ENCODE measurements at regions of chr13 and their contacts with region 1.

Region 1: GRCh38 chr13:20686863-20687579 is 16.5 kb upstream of the IL17D start:
- DNase-seq: no peak
- ATAC-seq: no peak
- H3K4me3 ChIP-seq: no peak overlapping the region
- H3K4me3 Mint-ChIP-seq: no peak overlapping the region
- H3K27ac ChIP-seq: no peak overlapping the region
- H3K27ac Mint-ChIP-seq: no peak overlapping the region
- H3K4me1 ChIP-seq: no peaks in the 10 kb centered on the region
- H3K4me1 Mint-ChIP-seq: no peaks in the 10 kb centered on the region
- H3K27me3 ChIP-seq: no peaks in the 10 kb centered on the region
- H3K27me3 Mint-ChIP-seq: no peaks in the 10 kb centered on the region

Region 2: DNA sequence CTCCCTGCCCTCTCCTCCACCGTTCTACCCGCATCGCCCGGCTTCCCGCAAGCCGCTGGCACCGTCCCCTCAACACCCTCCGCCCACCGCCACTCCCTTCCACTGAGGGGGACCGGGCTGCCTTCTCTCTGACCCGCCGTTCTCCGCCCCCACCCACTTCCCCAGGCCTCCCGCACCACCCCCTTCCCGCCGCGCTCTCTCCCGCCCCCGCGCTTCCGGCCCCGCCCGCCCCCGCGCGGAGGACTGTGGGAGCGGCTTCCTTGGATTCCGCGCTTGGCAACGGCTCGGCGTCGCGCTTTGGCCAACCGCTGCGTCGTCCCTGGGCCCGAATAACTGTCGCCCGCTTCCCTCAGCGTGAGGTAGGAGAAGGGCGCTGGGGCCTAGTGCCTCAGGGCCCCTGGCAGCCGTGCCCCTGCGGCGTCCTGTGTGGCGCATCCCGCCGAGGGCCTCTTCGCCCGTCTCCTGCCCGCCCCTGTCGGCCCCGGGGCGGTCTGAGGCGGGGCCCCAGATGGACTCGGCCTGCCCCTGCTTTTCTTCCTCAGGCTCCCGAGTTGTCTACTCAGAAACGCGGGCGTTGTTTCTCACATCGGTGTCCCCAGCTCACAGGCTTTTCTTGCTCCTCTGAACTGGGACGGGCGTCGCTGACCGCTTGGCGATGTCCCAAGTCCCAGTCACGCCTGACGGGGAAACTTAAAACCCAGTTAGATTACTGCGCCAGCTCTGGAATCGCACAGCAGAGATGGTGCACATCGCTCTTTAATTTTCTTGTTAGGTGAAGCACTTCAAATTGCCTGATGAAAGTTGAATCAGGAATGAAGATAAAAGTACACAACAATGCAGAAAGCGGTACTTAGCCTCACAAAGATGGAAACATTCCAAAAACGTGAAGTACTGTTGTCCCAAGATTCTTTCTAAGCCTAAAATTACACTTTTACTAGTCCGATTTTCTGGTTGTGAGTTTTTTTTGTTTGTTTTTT is 119.8 kb before region 1 on chr13 and contains the start of gene IFT88:
- CTCF ChIA-PET with region 1: no interaction called
- POLR2A ChIA-PET with region 1: interaction called in 1 of 2 experiments, 10 read pairs
- DNase-seq: peak; percentile 58 to 84 (median 73)
- ATAC-seq: peak; percentile 90 to 94 (median 91)
- H3K4me3 ChIP-seq: peak within 1 kb of the TSS; percentile 56 to 73
- H3K4me3 Mint-ChIP-seq: peak within 1 kb of the TSS; percentile 88 to 97 (median 90)
- H3K27ac ChIP-seq: peak within 1 kb of the TSS; percentile 56
- H3K27ac Mint-ChIP-seq: peak within 1 kb of the TSS; percentile 93
- H3K4me1 ChIP-seq: peaks cover 3 to 13% of the 10 kb centered on the region in 2 experiments
- H3K4me1 Mint-ChIP-seq: peaks cover 8 to 18% (median 16%) of the 10 kb centered on the region in 3 donors
- H3K27me3 ChIP-seq: no peaks in the 10 kb centered on the region
- H3K27me3 Mint-ChIP-seq: no peaks in the 10 kb centered on the region
- total RNA-seq, gene IFT88: 7.6 to 9.8 (median 8.6) TPM

Region 3: GRCh38 chr13:21528621-21529020 is 841.6 kb after region 1 on chr13:
- CTCF ChIA-PET with region 1: no interaction called
- POLR2A ChIA-PET with region 1: no interaction called
- DNase-seq: no peak
- ATAC-seq: no peak
- H3K4me3 ChIP-seq: no peak overlapping the region
- H3K4me3 Mint-ChIP-seq: no peak overlapping the region
- H3K27ac ChIP-seq: no peak overlapping the region
- H3K27ac Mint-ChIP-seq: no peak overlapping the region
- H3K4me1 ChIP-seq: peaks cover 0 to 14% of the 10 kb centered on the region in 2 experiments
- H3K4me1 Mint-ChIP-seq: peaks cover 11 to 22% (median 21%) of the 10 kb centered on the region in 3 donors
- H3K27me3 ChIP-seq: no peaks in the 10 kb centered on the region
- H3K27me3 Mint-ChIP-seq: no peaks in the 10 kb centered on the region